ENCODE measurements at regions of chr22 and their contacts with region 1.

Region 1: DNA sequence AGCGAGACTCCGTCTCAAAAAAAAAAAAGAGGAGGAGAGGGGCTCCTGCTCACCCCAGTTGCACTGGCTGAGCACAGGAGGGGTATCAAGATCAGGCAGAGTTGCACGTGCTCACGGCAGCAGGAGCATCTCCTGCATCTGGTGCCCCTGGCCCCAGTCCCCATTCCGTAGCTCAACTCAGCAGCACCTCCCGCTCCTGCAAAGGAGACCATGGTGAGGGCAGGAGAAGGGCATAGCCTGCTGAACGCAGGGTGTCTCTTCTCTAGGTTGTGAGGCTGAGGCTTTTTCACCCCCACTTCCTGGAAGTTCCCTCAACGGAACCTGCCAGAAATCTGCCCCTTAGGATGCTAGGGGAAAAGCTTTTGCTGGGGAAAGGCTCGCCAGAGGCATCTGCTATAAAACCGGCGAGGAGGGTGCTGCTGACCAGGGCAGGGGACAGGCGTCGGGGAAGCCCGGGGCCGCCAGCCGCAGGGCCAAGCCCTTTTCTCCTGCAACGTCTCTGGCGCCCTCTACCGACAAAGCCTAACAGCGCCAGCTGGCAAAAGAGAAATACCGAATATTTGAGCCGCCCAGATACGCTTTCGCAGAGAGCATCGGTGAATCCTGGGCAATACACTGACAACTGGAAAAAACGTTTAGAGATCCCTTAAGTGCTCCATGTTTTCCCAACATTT is 1.0 kb upstream of the PPP6R2 start:
- DNase-seq: peak; percentile 91
- ATAC-seq: peak; percentile 52
- H3K4me3 ChIP-seq: peak overlapping the region; percentile 33 to 78 (median 74)
- H3K4me3 Mint-ChIP-seq: peak overlapping the region; percentile 90
- H3K27ac ChIP-seq: peak overlapping the region; percentile 51 to 81
- H3K27ac Mint-ChIP-seq: peak overlapping the region; percentile 82
- H3K4me1 ChIP-seq: peaks cover 16 to 21% of the 10 kb centered on the region in 2 donors
- H3K4me1 Mint-ChIP-seq: peaks cover 10% of the 10 kb centered on the region
- H3K27me3 ChIP-seq: no peaks in the 10 kb centered on the region
- H3K27me3 Mint-ChIP-seq: no peaks in the 10 kb centered on the region
- CTCF ChIP-seq: peak; percentile 94

Region 2: DNA sequence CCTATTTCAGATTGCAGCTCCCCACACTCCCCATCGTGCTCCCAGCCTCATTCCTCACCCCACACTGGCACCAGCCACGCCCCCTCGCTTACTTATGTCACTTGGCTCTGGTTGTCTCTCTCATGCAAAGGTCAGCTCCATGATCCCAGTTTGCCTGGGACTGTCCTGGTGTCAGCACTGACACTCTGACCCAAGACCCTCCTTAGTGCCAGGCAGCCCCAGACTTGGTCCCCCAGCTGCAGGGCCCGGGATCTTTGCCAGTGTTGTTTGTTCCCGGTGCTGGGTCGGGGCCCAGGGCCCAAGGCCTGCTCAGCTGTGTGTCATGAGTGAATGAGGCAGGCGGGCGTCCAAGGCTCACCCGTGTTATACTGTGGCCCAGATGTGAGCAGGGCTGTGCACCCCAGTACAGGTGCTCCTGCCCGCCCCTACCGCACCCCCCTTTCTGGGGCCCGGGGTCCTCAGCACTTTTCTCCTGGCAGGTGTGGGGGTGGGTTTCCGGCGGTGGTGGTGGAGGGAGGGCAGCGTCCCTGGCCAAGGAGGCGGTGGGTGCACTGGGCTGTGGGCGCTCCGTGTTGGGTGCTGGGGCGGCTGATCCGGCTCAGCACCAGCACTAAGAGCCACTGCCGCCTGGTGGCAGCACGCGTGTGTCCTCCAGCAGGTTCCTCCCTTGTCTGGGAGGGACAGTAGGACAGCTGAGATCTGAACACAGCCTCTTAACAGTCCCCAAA is 349.0 kb before region 1 on chr22:
- CTCF ChIA-PET with region 1: no interaction called
- POLR2A ChIA-PET with region 1: no interaction called
- intact Hi-C with region 1: no loop called
- DNase-seq: peak; percentile 82
- ATAC-seq: peak; percentile 96
- H3K4me3 ChIP-seq: no peak overlapping the region
- H3K4me3 Mint-ChIP-seq: peak overlapping the region; percentile 51
- H3K27ac ChIP-seq: no peak overlapping the region
- H3K27ac Mint-ChIP-seq: peak overlapping the region; percentile 82
- H3K4me1 ChIP-seq: peaks cover 11 to 24% of the 10 kb centered on the region in 2 donors
- H3K4me1 Mint-ChIP-seq: peaks cover 15% of the 10 kb centered on the region
- H3K27me3 ChIP-seq: no peaks in the 10 kb centered on the region
- H3K27me3 Mint-ChIP-seq: no peaks in the 10 kb centered on the region
- CTCF ChIP-seq: peak; percentile 87

Region 3: GRCh38 chr22:50190941-50191741 is 151.0 kb before region 1 on chr22:
- CTCF ChIA-PET with region 1: interaction called, 3 read pairs
- POLR2A ChIA-PET with region 1: interaction called, 3 read pairs
- intact Hi-C with region 1: loop called (anchors 1 kb)
- DNase-seq: peak; percentile 97
- ATAC-seq: peak; percentile 44
- H3K4me3 ChIP-seq: peak overlapping the region; percentile 14 to 63 (median 48)
- H3K4me3 Mint-ChIP-seq: peak overlapping the region; percentile 86
- H3K27ac ChIP-seq: peak overlapping the region; percentile 99 to 100
- H3K27ac Mint-ChIP-seq: peak overlapping the region; percentile 99
- H3K4me1 ChIP-seq: peaks cover 84 to 97% of the 10 kb centered on the region in 2 donors
- H3K4me1 Mint-ChIP-seq: peaks cover 62% of the 10 kb centered on the region
- H3K27me3 ChIP-seq: no peaks in the 10 kb centered on the region
- H3K27me3 Mint-ChIP-seq: no peaks in the 10 kb centered on the region
- CTCF ChIP-seq: no peak

Region 4: DNA sequence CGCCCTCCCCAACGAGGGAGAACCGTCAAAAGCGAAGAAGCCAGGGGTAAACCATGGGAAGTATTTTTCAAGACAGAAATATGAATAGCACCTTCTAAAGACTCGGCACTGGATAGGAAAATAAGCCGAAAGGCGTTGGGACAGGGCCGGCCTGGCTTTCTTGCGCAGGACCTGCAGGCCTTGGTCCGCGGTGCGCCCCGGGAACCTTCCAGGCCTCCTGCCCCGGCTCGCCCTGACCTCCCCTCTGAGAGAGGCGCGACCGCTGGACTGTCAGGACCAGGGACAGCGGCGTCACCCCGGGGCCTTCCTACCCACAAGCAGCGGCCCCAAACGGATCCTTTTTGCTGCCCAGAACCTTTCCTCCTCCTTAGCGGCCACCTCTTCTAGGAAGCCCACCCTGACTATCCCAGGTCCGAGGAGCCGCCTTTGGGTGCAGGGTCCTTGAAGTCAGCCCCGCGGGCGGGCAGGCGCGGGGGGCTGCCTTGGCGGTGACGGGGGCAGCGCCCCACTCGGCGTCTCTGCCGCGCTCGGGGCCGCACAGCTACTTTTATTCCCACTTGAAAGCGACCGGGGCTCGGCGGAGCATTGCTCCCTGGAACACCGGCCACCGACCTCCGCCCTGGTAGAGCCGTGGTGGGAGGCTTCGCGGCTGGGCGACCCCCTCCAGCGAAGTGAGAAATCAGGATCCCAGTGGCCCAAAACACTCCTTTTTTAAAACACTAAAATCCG is 71.3 kb before region 1 on chr22:
- CTCF ChIA-PET with region 1: interaction called, 17 read pairs
- POLR2A ChIA-PET with region 1: no interaction called
- intact Hi-C with region 1: loop called (anchors 1 kb)
- DNase-seq: peak; percentile 82
- ATAC-seq: peak; percentile 58
- H3K4me3 ChIP-seq: peak overlapping the region in 4 of 5 experiments; percentile 43 to 79 (median 62)
- H3K4me3 Mint-ChIP-seq: peak overlapping the region; percentile 80
- H3K27ac ChIP-seq: no peak overlapping the region
- H3K27ac Mint-ChIP-seq: peak overlapping the region; percentile 10
- H3K4me1 ChIP-seq: peaks cover 23 to 34% of the 10 kb centered on the region in 2 donors
- H3K4me1 Mint-ChIP-seq: peaks cover 19% of the 10 kb centered on the region
- H3K27me3 ChIP-seq: peaks cover 0 to 23% (median 9%) of the 10 kb centered on the region in 4 experiments
- H3K27me3 Mint-ChIP-seq: no peaks in the 10 kb centered on the region
- CTCF ChIP-seq: no peak

Region 5: DNA sequence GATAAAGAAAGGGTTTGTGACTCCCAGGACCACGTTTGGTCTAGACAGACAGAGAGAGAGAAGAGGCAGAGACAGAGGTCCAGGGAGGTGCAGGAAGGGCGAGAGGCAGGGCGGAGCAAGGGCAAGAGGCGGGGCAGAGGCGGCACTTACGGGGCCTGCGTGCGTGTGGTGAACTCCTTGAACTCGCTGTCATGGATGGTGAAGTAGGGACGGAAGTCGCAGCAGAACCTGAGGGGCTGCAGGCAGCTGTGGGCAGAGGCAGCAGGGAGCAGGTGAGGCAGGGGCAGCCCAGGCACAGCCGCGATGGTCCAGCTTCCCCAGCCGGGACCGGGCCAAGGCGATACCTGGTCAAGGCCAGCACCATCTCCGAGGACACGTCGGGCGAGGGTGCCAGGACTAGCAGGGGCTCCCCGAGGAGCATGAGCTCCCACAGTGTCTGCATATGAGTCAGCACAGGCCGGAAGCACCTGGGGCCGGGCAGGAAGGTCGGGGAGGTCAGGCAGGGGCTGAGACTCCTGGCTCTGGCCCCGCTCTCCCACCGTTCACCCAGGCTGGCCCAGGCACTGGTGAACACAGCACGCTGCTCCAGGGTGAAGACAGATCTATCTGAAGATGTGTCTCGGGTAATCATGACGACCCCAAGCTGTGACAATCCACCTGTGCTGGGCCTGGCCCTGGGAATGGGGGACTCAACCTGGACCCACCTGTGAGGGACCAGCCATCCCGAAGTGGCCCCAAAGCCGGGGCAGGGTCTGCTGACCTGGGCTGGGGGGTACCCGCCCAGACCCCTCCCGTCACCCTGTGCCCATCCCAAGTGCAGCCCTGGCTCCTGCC is 27.4 kb before region 1 on chr22:
- CTCF ChIA-PET with region 1: interaction called, 12 read pairs
- POLR2A ChIA-PET with region 1: no interaction called
- intact Hi-C with region 1: no loop called
- DNase-seq: peak; percentile 89
- ATAC-seq: peak; percentile 86
- H3K4me3 ChIP-seq: peak overlapping the region in 4 of 5 experiments; percentile 34 to 61 (median 45)
- H3K4me3 Mint-ChIP-seq: peak overlapping the region; percentile 88
- H3K27ac ChIP-seq: peak overlapping the region; percentile 63 to 71
- H3K27ac Mint-ChIP-seq: peak overlapping the region; percentile 97
- H3K4me1 ChIP-seq: peaks cover 23 to 48% of the 10 kb centered on the region in 2 donors
- H3K4me1 Mint-ChIP-seq: peaks cover 43% of the 10 kb centered on the region
- H3K27me3 ChIP-seq: no peaks in the 10 kb centered on the region
- H3K27me3 Mint-ChIP-seq: no peaks in the 10 kb centered on the region
- CTCF ChIP-seq: no peak

Region 6: GRCh38 chr22:50498322-50498890 is 156.3 kb after region 1 on chr22:
- CTCF ChIA-PET with region 1: interaction called, 15 read pairs
- POLR2A ChIA-PET with region 1: no interaction called
- intact Hi-C with region 1: no loop called
- DNase-seq: peak; percentile 80
- ATAC-seq: peak; percentile 94
- H3K4me3 ChIP-seq: no peak overlapping the region
- H3K4me3 Mint-ChIP-seq: no peak overlapping the region
- H3K27ac ChIP-seq: no peak overlapping the region
- H3K27ac Mint-ChIP-seq: no peak overlapping the region
- H3K4me1 ChIP-seq: peaks cover 3 to 10% of the 10 kb centered on the region in 2 donors
- H3K4me1 Mint-ChIP-seq: peaks cover 4% of the 10 kb centered on the region
- H3K27me3 ChIP-seq: no peaks in the 10 kb centered on the region
- H3K27me3 Mint-ChIP-seq: no peaks in the 10 kb centered on the region
- CTCF ChIP-seq: peak; percentile 73

Region 7: GRCh38 chr22:50582562-50583293 is 240.6 kb after region 1 on chr22 and contains the start of gene CHKB:
- CTCF ChIA-PET with region 1: no interaction called
- POLR2A ChIA-PET with region 1: no interaction called
- intact Hi-C with region 1: loop called (anchors 2 kb)
- DNase-seq: peak; percentile 98
- ATAC-seq: peak; percentile 94
- H3K4me3 ChIP-seq: peak within 1 kb of the TSS; percentile 58 to 91 (median 80)
- H3K4me3 Mint-ChIP-seq: peak within 1 kb of the TSS; percentile 89
- H3K27ac ChIP-seq: peak within 1 kb of the TSS; percentile 82 to 96
- H3K27ac Mint-ChIP-seq: peak within 1 kb of the TSS; percentile 93
- H3K4me1 ChIP-seq: peaks cover 14 to 18% of the 10 kb centered on the region in 2 donors
- H3K4me1 Mint-ChIP-seq: peaks cover 24% of the 10 kb centered on the region
- H3K27me3 ChIP-seq: no peaks in the 10 kb centered on the region
- H3K27me3 Mint-ChIP-seq: no peaks in the 10 kb centered on the region
- CTCF ChIP-seq: no peak
- total RNA-seq, gene CHKB: 238 and 239 TPM in 2 replicates